ENCODE measurements at regions of chr7 and their contacts with region 1.

Region 1: DNA sequence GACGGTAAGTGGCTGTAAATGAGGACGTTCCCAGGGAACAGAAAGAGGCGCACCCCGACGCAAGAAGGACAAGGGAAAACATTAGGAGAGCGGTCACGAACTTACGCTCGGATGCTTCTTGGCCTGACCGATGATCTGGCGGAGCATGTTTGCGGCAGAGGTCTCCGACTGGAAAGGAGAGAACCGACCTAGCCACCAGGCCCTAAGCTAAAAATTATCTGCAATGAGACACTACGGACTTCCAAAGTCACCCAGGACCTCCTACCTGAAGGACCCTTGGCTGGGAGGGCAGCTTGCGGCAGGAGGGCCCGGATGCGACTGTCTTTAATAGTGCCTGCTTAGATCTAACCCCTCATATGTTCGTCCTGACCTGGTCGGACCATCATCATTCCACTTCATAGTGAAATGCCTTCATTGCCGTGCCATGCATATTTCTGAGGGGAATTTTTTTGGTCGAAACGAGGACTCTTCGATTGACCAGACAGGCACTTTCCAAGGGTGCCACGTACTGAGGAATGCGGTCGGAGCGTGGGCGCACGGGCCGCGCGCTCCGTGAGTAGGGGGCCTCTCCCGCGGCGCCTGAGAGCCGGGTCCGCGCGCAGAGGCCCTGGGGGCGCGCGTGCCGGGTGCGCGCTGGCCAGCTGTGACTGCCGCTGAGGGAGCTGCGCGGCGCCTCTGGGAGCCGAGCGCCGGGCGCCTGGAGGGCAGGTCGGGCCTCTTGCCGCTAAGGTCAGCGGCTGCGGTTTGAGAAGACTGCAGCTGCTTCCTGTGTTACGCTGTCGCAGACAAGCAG is 33.6 kb upstream of the PHF14 start:
- DNase-seq: peak; percentile 95
- ATAC-seq: peak; percentile 93
- H3K4me3 ChIP-seq: peak overlapping the region; percentile 89
- H3K27ac ChIP-seq: peak overlapping the region; percentile 92
- H3K4me1 ChIP-seq: peaks cover 5% of the 10 kb centered on the region
- H3K27me3 ChIP-seq: no peaks in the 10 kb centered on the region
- CTCF ChIP-seq: no peak
- POLR2A ChIP-seq: peak; percentile 98
- RAD21 ChIP-seq: no peak; the same call in 1 of the 2 replicates

Region 2: GRCh38 chr7:10863476-10863875 is 76.6 kb before region 1 on chr7:
- CTCF ChIA-PET with region 1: no interaction called
- POLR2A ChIA-PET with region 1: no interaction called
- dilution Hi-C with region 1: no loop called
- in situ Hi-C with region 1: no loop called
- intact Hi-C with region 1: no loop called
- DNase-seq: no peak
- ATAC-seq: no peak
- H3K4me3 ChIP-seq: no peak overlapping the region
- H3K27ac ChIP-seq: no peak overlapping the region
- H3K4me1 ChIP-seq: no peaks in the 10 kb centered on the region
- H3K27me3 ChIP-seq: no peaks in the 10 kb centered on the region
- CTCF ChIP-seq: no peak
- POLR2A ChIP-seq: no peak
- RAD21 ChIP-seq: no peak

Region 3: DNA sequence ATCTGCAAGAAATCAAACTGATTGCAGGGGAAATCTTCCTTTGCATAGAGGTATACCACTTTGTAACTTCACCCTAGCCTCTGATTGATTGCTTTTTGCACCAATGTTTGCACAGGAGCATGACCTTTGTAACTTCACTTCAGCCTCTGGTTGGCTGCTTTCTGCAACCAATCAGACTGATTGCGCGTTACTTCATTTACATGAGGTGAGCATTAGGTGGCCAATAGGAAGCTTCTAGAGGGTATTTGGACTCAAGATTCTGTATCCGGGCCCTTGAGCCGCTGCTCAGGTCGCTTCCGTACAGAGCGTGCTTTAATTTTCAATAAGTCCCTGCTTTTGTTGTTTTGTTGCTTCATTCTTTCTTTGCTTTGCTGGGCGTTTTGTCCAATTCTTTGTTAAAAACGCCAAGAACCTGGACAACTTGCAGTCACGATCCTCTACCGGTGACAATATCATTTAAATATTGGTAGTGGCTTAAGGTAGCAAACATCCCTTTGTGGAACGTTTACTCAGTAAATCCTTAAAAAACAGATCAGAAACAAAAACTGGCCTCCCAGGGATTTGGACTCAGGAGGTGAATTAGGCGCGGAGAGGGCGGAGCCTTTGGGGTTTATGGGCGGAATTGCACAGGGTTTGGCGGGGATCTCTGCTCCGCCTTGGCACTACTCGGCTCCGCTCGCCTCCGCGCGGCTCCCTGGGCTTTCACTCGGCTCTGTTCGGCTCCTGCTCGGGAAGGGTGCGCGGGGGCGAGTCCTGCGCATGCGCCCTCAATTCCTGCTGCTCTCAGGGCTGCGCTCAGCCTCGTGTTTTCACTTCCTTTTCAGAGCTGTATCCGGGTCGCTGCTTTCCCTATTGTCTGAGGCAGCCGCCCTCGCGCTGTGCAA is 33.2 kb after region 1 on chr7 and contains the start of gene PHF14:
- CTCF ChIA-PET with region 1: no interaction called
- POLR2A ChIA-PET with region 1: interaction called, 4 read pairs
- dilution Hi-C with region 1: no loop called
- in situ Hi-C with region 1: no loop called
- intact Hi-C with region 1: loop called (anchors 1 kb)
- DNase-seq: peak; percentile 94
- ATAC-seq: peak; percentile 98
- H3K4me3 ChIP-seq: peak within 1 kb of the TSS; percentile 75
- H3K27ac ChIP-seq: peak within 1 kb of the TSS; percentile 58
- H3K4me1 ChIP-seq: no peaks in the 10 kb centered on the region
- H3K27me3 ChIP-seq: no peaks in the 10 kb centered on the region
- CTCF ChIP-seq: no peak
- POLR2A ChIP-seq: peak; percentile 81
- RAD21 ChIP-seq: no peak
- total RNA-seq, gene PHF14: 17.2 and 24.4 TPM in 2 replicates

Region 4: DNA sequence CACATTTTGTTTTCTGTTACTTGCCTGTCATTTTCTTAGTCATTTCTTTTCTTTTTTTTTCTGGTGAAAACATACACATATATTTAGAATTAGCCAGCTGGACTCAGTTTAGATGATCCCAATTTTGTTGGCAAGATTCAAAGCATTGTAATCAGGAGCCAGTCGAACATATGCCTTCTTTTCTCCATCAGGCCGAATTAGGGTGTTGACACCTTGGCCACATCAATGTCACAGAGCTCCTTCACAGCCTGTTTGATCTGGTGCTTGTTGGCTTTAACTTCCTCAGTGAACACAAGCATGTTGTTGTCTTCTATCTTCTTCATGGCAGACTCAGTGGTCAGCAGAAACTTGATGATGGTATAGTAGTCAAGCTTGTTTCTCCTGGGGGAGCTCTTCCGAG is 66.2 kb after region 1 on chr7:
- CTCF ChIA-PET with region 1: no interaction called
- POLR2A ChIA-PET with region 1: interaction called, 10 read pairs
- dilution Hi-C with region 1: no loop called
- in situ Hi-C with region 1: no loop called
- intact Hi-C with region 1: no loop called
- DNase-seq: no peak
- ATAC-seq: no peak
- H3K4me3 ChIP-seq: no peak overlapping the region
- H3K27ac ChIP-seq: no peak overlapping the region
- H3K4me1 ChIP-seq: no peaks in the 10 kb centered on the region
- H3K27me3 ChIP-seq: no peaks in the 10 kb centered on the region
- CTCF ChIP-seq: no peak
- POLR2A ChIP-seq: no peak
- RAD21 ChIP-seq: no peak

Region 5: DNA sequence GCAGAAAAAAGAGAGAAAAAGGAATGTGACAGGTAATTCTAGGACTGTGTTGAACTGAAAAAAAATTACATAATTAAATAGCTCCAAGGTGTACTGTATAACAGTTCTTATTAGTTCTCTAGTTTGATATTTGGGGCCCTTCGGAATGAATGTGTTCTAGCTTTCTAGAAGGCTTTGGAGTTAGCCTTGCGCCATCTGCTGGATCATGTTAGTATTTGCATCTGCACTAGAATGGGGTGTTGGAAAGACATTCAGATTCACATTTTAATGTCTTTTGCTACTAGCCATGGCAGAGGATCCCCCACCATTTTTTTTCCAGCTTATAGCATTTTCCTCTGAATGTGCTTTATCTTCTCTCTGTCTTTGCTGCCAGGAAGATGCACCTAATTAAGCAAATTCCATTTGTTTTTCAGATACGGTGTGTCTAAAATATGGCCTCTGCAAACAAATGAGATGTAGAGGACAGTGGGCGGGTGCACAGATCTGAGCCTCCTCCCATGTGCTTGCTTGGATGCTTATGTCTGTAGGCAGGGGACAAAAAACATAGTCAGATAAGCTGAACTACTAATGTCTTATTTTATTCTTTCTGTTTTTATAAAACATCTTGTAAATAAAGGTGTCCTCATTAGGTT is 272.1 kb after region 1 on chr7:
- CTCF ChIA-PET with region 1: no interaction called
- POLR2A ChIA-PET with region 1: no interaction called
- dilution Hi-C with region 1: no loop called
- in situ Hi-C with region 1: no loop called
- intact Hi-C with region 1: loop called (anchors 1 kb)
- DNase-seq: peak; percentile 66
- ATAC-seq: peak; percentile 88
- H3K4me3 ChIP-seq: no peak overlapping the region
- H3K27ac ChIP-seq: no peak overlapping the region
- H3K4me1 ChIP-seq: peaks cover 5% of the 10 kb centered on the region
- H3K27me3 ChIP-seq: no peaks in the 10 kb centered on the region
- CTCF ChIP-seq: peak; percentile 76
- POLR2A ChIP-seq: no peak
- RAD21 ChIP-seq: peak; percentile 74